ENCODE measurements at regions of chr6 and their contacts with region 1.

Region 1: DNA sequence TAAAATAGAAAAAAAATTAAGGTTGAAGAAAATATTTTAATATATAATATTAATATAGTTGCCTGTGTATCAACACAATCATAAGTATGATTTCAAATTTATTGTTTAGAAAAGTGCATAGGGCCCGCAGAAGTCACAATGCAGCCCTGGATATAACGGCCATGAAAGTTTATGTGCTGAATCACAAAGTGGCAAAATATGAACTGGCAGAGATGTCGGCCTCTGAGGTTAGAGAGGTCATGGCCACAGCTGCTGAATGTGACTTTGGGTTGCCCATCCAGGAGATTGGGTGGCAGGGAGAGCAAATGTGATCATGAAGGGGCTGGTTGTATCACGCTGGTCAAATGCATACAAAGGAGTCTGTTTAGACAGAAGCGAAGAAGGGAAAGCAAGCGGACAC is 35.7 kb downstream of the COL11A2 start:
- DNase-seq: no peak
- H3K4me3 ChIP-seq: no peak overlapping the region
- H3K4me3 Mint-ChIP-seq: no peak overlapping the region
- H3K27ac ChIP-seq: no peak overlapping the region
- H3K27ac Mint-ChIP-seq: no peak overlapping the region
- H3K4me1 ChIP-seq: peaks cover 11 to 14% of the 10 kb centered on the region in 2 donors
- H3K4me1 Mint-ChIP-seq: peaks cover 12% of the 10 kb centered on the region
- H3K27me3 ChIP-seq: no peaks in the 10 kb centered on the region
- H3K27me3 Mint-ChIP-seq: peaks cover 3 to 10% (median 5%) of the 10 kb centered on the region in 3 donors
- CTCF ChIP-seq: no peak

Region 2: GRCh38 chr6:33123732-33124524 is 32.6 kb before region 1 on chr6:
- intact Hi-C with region 1: loop called in 1 of 2 experiments (anchors 5 kb)
- DNase-seq: peak; percentile 28 to 32 (median 32)
- H3K4me3 ChIP-seq: no peak overlapping the region
- H3K4me3 Mint-ChIP-seq: no peak overlapping the region
- H3K27ac ChIP-seq: no peak overlapping the region
- H3K27ac Mint-ChIP-seq: no peak overlapping the region
- H3K4me1 ChIP-seq: no peaks in the 10 kb centered on the region
- H3K4me1 Mint-ChIP-seq: no peaks in the 10 kb centered on the region
- H3K27me3 ChIP-seq: no peaks in the 10 kb centered on the region
- H3K27me3 Mint-ChIP-seq: peaks cover 5 to 15% (median 6%) of the 10 kb centered on the region in 3 donors
- CTCF ChIP-seq: peak; percentile 70

Region 3: GRCh38 chr6:33391278-33391921 is 234.8 kb after region 1 on chr6 and contains the start of gene KIFC1:
- intact Hi-C with region 1: no loop called
- DNase-seq: peak; percentile 99 to 100 (median 100)
- H3K4me3 ChIP-seq: peak within 1 kb of the TSS; percentile 71 to 89 (median 74)
- H3K4me3 Mint-ChIP-seq: peak within 1 kb of the TSS; percentile 80 to 87
- H3K27ac ChIP-seq: peak within 1 kb of the TSS; percentile 72 to 78
- H3K27ac Mint-ChIP-seq: peak within 1 kb of the TSS; percentile 85 to 95 (median 94)
- H3K4me1 ChIP-seq: peaks cover 26 to 31% of the 10 kb centered on the region in 2 donors
- H3K4me1 Mint-ChIP-seq: peaks cover 39% of the 10 kb centered on the region
- H3K27me3 ChIP-seq: no peaks in the 10 kb centered on the region
- H3K27me3 Mint-ChIP-seq: peaks cover 0 to 1% (median 0%) of the 10 kb centered on the region in 3 donors
- CTCF ChIP-seq: peak; percentile 94
- polyA plus RNA-seq, gene KIFC1: 0.14 to 0.87 (median 0.68) TPM